ENCODE measurements at regions of chr5 and their contacts with region 1.

Region 1: GRCh38 chr5:168920019-168920810 is 341.0 kb upstream of the PANK3 start:
- DNase-seq: no peak
- H3K4me3 ChIP-seq: no peak overlapping the region
- H3K27ac ChIP-seq: no peak overlapping the region
- H3K4me1 ChIP-seq: no peaks in the 10 kb centered on the region
- H3K27me3 ChIP-seq: peaks cover 83% of the 10 kb centered on the region
- CTCF ChIP-seq: no peak

Region 2: GRCh38 chr5:167478188-167478587 is 1442.0 kb before region 1 on chr5:
- CTCF ChIA-PET with region 1: no interaction called
- POLR2A ChIA-PET with region 1: no interaction called
- intact Hi-C with region 1: loop called (anchors 10 kb)
- DNase-seq: no peak
- H3K4me3 ChIP-seq: no peak overlapping the region
- H3K27ac ChIP-seq: no peak overlapping the region
- H3K4me1 ChIP-seq: no peaks in the 10 kb centered on the region
- H3K27me3 ChIP-seq: no peaks in the 10 kb centered on the region
- CTCF ChIP-seq: no peak

Region 3: DNA sequence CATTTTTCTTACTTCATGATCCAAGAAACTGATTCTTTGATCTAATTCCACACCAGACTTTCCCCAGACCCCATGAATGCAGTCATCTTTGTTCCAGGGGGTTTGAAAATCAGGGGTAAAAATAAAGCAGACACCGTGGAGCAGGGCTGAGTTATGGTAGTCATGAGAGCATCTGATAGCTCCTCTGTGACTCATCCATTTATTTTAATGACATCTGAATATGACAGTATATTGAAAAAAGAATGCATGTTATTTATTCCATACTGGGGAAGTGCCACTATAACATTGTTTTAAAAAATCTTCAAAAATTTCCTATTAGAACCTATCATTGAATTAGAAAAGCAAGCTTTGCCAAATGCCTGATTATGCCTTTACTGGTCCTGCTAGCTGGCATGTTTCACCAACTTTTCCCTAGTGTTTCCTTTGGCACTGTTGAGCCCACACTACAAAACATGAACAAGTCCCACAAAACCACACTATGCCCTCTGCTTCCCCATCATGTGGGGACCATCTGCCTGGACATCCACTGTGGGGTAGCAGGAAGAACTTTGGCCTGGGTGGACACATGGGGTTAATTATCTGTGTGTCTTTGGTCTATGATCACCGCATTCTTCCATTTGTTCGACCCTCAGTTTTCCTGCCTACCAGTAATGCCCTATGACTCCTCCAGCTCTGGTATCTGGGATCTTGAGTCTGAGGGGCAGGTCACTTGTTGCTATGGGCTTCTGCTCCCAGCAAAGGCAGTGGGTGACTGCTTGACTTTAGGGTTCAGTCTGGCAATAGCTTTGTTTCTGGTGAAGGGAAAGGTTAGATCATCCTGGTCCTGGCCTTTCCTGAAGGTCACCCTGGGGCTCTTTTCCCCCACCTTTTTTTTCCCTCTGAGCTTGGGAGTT is 258.4 kb before region 1 on chr5:
- CTCF ChIA-PET with region 1: no interaction called
- POLR2A ChIA-PET with region 1: no interaction called
- intact Hi-C with region 1: no loop called
- DNase-seq: no peak
- H3K4me3 ChIP-seq: no peak overlapping the region
- H3K27ac ChIP-seq: no peak overlapping the region
- H3K4me1 ChIP-seq: no peaks in the 10 kb centered on the region
- H3K27me3 ChIP-seq: no peaks in the 10 kb centered on the region
- CTCF ChIP-seq: no peak

Region 4: DNA sequence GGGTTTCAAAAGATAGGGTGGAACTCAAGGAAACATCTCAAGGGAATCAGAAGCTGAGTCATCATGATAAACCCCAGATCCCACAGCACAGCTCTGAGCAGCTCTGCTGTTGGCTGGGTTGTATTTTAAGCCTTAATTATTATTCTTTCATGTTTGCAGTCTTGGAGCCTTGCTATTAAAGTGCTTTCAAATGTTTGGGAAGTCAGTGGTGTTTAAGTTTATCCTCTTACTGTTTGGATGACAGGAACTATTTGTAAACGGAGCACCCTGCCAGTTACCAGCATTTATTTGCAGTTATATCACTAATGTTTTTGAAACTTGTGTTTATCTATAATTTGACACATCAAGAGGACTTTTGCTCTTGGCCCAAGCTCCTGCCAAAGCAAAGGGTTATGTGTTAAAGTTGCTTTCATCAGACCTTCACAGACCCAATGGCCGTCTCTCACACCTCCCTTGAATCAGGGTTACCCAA is 522.2 kb after region 1 on chr5:
- CTCF ChIA-PET with region 1: no interaction called
- POLR2A ChIA-PET with region 1: no interaction called
- intact Hi-C with region 1: no loop called
- DNase-seq: no peak
- H3K4me3 ChIP-seq: no peak overlapping the region
- H3K27ac ChIP-seq: no peak overlapping the region
- H3K4me1 ChIP-seq: no peaks in the 10 kb centered on the region
- H3K27me3 ChIP-seq: peaks cover 40% of the 10 kb centered on the region
- CTCF ChIP-seq: no peak